ENCODE measurements at regions of chr16 and their contacts with region 1.

Region 1: DNA sequence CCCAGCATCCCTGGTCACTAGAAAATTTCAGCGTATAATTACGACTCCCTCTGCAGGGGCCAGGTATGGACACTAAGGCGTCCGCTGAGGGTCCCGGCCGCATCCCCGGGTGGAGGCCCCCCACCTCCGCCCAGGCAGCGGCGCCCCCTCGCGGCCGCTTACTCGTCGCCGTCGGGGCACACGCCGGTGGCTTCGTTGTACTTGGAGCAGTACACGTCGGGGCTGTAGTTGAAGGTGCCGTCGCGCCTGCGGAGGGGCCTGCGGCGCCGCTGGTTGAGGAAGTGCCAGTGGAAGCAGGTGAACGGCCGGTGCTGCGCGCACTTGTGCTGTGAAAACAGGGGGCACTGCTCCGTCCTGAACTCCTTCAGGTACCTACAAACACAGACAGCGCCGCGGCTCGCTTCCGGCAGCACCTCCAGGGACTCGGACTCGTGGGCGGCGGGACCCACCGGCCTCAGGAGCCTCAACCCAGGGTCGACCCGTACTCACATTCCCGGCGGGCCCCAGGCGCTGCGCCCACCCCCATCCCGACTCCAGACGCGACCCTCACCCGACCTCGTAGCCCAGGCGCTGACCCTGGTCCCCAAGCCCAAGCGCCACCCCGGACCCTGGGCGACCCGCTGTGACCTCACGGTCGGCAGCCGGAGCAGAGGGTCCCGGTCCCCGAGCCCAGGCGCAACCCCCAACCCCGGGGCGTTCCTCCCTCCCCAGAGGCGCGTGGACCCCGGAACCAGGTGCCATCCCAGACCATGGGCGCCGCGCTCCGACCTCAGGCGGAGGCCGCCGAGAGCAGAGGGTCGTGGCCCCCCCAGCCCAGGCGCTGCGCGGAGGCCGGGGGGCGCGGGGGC is 596 bp downstream of the UNKL start:
- DNase-seq: peak; percentile 75 to 80 (median 78)
- ATAC-seq: peak; percentile 80
- H3K4me3 ChIP-seq: peak overlapping the region; percentile 84
- H3K27ac ChIP-seq: peak overlapping the region; percentile 90
- H3K4me1 ChIP-seq: peaks cover 14 to 35% of the 10 kb centered on the region in 2 experiments; a peak in 4 of 5 replicates
- H3K27me3 ChIP-seq: no peaks in the 10 kb centered on the region
- CTCF ChIP-seq: peak; percentile 72 to 85 (median 83)
- EP300 ChIP-seq: no peak
- POLR2A ChIP-seq: no peak
- RAD21 ChIP-seq: peak; percentile 50 to 63

Region 2: DNA sequence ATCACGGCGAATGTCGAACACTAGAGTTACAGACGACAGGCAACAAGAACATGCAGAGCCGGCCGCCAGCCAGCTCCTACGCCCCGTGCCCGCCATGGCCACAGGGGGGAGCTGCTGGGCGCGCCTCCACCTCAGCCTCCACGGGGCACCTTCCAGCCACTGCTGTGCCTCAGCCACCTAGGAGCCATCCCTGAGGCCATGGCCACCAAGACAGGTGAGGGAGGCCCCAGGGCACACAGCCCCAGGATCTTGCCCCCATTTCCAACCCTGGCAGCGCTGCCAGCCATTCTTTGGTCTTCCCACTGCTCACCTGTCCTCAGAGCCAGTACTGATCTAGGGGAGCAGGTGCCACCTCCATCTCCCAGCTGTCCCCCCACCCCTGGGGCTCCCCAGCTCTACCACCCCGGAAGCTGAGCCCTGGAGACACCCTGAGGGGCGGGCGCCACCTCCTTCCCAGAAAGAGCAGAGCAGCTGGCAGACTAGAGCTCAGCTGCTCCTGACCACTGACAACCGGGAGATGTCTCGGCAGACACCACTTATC is 50.3 kb before region 1 on chr16:
- CTCF ChIA-PET with region 1: no interaction called
- POLR2A ChIA-PET with region 1: interaction called, 4 read pairs
- in situ Hi-C with region 1: no loop called
- intact Hi-C with region 1: loop called (anchors 1 kb)
- DNase-seq: peak; percentile 71 to 83 (median 77)
- ATAC-seq: peak; percentile 99
- H3K4me3 ChIP-seq: no peak overlapping the region
- H3K27ac ChIP-seq: no peak overlapping the region
- H3K4me1 ChIP-seq: peaks cover 0 to 48% of the 10 kb centered on the region in 2 experiments; a peak in 2 of 5 replicates
- H3K27me3 ChIP-seq: no peaks in the 10 kb centered on the region
- CTCF ChIP-seq: peak; percentile 79 to 94 (median 91)
- EP300 ChIP-seq: no peak
- POLR2A ChIP-seq: no peak
- RAD21 ChIP-seq: peak; percentile 64 to 81

Region 3: DNA sequence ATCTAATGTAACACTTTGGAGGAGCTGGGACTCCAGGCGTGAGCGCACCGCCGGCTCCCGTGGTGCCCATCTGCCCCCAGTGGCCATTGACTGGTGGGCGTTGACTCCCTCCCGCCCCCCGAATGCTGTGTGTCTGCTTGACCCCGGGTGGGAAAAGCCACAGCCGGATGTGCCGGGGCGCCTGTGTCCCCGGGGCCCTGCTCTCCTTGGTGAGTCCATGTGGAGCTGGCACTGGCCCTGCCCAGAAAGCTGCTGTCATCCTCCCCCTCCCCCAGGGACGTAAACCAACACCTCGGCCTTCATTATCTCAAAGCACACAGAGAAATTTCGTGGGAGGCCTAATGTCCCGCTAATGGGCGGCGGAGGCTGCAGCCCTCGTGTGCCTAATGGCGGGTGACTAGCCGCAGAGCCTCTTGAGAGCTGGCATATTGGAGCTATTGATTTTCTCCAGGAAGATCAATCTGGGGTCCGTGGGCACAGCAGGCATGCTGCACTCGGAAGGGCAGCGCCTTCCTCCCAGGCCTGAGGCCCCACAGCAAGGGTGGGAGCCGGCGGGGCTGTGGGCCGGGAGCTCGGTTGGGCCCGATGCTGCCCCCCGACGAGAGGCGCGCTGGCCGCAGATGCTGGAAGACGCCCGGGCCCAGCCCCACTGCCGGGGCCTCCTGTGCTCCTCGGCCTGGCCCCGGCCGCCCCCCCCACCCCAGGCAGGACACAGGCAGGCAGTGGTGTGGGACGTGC is 13.0 kb after region 1 on chr16:
- CTCF ChIA-PET with region 1: no interaction called
- POLR2A ChIA-PET with region 1: no interaction called
- in situ Hi-C with region 1: no loop called
- intact Hi-C with region 1: no loop called
- DNase-seq: peak in 1 of 4 experiments; percentile 27
- ATAC-seq: no peak; the same call in 2 of the 3 replicates
- H3K4me3 ChIP-seq: no peak overlapping the region
- H3K27ac ChIP-seq: no peak overlapping the region
- H3K4me1 ChIP-seq: peaks cover 0 to 64% of the 10 kb centered on the region in 2 experiments; a peak in 2 of 5 replicates
- H3K27me3 ChIP-seq: no peaks in the 10 kb centered on the region
- CTCF ChIP-seq: peak in 1 of 3 experiments; percentile 14; a peak in 1 of 6 replicates
- EP300 ChIP-seq: no peak
- POLR2A ChIP-seq: no peak
- RAD21 ChIP-seq: no peak

Measured in K562 (cell line).